ENCODE measurements at regions of chr3 and their contacts with region 1.

Region 1: DNA sequence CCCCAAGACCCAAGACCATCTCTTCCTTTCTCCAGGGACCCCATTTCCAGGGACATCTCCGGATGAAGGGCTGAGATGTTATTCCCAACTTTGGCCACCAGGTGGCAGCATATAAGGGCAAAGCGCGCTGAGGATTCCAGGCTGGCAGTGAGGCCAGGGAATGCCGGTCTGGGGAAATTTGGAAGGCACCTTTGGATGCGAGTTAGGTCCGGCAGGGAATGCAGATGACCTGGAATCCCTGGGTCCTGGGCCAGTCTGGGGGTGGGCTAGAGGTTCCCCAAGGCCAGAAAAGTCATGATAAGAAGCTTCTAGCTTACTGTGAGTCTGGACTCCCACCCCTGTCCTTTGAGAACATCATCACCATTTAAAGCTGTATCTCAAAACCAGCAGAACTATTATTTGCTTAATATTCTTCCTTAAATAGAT is 1.6 kb upstream of the CHST13 start:
- DNase-seq: peak; percentile 54 to 79 (median 59)
- H3K4me3 ChIP-seq: no peak overlapping the region
- H3K27ac ChIP-seq: no peak overlapping the region
- H3K4me1 ChIP-seq: peaks cover 7 to 14% of the 10 kb centered on the region in 2 donors
- H3K27me3 ChIP-seq: peaks cover 4% of the 10 kb centered on the region
- CTCF ChIP-seq: peak; percentile 81 to 99 (median 87)
- POLR2A ChIP-seq: no peak

Region 2: DNA sequence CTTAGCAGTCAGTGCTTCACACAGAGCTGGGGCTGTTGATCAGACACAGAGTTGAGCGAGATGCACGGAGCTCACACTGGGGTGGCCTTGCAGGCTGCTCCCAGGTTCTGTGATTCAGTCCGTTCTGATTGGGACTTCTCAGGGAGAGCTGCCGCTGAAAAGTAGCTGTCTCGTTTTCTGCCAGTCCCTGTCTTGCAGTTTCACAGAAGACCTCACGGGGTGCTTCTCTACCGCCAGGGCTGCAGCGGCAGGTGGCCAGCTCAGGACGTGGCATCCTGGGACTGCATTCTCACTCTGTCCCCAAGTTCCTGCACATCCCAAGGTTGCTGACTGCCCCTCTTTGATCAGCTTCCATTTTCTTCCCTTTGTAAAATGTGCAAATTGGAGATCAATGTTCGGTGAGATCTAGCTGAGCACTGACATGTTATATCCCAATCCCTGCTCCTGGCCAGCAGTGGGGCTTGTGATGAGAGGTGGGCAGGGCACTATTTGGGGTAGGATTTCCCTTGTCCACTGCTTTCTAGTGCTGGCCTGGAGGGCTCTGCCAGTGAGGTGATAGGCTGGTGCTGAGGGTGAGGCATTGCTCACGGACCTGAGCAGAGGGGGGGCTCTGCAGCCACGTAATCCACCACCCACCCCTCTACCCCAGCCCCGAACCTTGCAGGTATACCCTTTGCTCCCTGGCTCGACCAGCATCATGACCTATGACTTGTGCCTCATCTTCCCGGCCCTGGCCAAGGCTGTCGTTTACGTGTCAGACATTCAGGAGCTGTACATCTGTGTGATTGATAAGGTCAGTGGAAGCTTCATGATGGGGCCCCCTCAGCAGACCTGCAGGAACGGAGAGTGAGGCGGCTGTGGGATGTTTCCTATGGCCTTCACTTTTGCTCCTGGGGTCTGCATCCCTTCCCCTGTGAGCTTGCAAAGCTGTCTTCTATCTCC is 137.8 kb after region 1 on chr3:
- intact Hi-C with region 1: loop called in 1 of 2 experiments (anchors 5 kb)
- DNase-seq: peak in 6 of 7 donors; percentile 52 to 72 (median 66)
- H3K4me3 ChIP-seq: no peak overlapping the region
- H3K27ac ChIP-seq: no peak overlapping the region
- H3K4me1 ChIP-seq: peaks cover 0 to 3% of the 10 kb centered on the region in 2 donors
- H3K27me3 ChIP-seq: peaks cover 9% of the 10 kb centered on the region
- CTCF ChIP-seq: peak; percentile 21 to 46 (median 44)
- POLR2A ChIP-seq: no peak

Region 3: DNA sequence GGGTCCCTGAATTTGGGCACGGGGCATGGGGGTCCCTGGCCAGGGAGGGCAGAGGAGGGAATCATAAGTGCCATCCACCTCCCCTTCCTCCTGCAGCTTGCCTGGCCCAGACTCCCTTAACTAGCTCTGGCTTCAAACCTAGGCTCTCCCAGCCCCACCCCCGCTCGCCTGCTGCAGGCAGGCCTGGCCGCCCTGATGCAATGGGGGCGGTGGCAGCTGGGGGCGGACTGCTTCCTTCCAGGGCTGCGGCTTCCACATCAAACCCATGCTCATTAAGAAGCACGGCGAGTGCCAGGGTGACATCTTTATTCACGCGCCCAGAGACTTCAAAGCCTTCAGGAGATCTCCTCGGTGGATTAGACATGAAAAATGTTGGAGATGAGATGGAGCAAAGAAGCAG is 945.0 kb after region 1 on chr3:
- intact Hi-C with region 1: loop called in 1 of 2 experiments (anchors 10 kb)
- DNase-seq: no peak
- H3K4me3 ChIP-seq: no peak overlapping the region
- H3K27ac ChIP-seq: no peak overlapping the region
- H3K4me1 ChIP-seq: no peaks in the 10 kb centered on the region
- H3K27me3 ChIP-seq: no peaks in the 10 kb centered on the region
- CTCF ChIP-seq: no peak
- POLR2A ChIP-seq: no peak

Region 4: DNA sequence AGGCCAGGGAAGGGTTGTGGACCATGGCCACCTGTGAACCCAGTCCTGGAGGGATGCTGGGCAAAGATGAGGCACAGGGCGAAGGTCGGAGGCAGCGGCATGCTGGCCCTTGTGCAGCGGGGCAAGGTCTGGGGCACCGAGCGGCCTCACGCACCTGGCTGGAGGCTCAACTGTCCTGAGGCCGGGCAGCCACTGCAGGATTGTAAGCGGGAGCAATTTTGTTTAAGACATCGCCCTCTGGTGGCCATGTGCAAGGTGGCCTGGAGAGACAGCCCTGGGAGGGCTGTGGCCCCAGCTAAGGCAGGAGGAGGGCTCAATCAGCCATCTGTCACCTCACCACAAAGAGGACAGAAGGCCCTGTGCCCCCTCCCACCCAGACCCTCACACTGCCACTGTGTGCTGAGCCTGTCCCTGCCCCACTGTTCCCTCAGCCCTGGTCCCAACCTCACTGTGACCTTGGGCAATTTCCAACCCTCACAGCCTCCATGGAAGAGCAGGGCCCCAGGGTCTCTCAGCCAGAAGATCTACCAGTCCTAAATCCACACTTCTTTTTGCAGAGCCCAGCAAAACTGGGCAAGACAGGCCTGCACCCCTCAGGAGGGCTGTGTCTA is 1021.9 kb after region 1 on chr3:
- intact Hi-C with region 1: loop called (anchors 5 to 10 kb)
- DNase-seq: peak; percentile 65 to 90 (median 81)
- H3K4me3 ChIP-seq: no peak overlapping the region
- H3K27ac ChIP-seq: no peak overlapping the region
- H3K4me1 ChIP-seq: peaks cover 4 to 11% of the 10 kb centered on the region in 2 donors
- H3K27me3 ChIP-seq: no peaks in the 10 kb centered on the region
- CTCF ChIP-seq: peak; percentile 62 to 83 (median 73)
- POLR2A ChIP-seq: no peak